Astrocyte of the cerebellum (primary cell): ENCODE measurements at regions of chr16 and their contacts with region 1.

Region 1: GRCh38 chr16:15732416-15732815 is 82.4 kb downstream of the NDE1 start:
- DNase-seq: no peak
- H3K4me3 ChIP-seq: no peak overlapping the region
- CTCF ChIP-seq: no peak

Region 2: DNA sequence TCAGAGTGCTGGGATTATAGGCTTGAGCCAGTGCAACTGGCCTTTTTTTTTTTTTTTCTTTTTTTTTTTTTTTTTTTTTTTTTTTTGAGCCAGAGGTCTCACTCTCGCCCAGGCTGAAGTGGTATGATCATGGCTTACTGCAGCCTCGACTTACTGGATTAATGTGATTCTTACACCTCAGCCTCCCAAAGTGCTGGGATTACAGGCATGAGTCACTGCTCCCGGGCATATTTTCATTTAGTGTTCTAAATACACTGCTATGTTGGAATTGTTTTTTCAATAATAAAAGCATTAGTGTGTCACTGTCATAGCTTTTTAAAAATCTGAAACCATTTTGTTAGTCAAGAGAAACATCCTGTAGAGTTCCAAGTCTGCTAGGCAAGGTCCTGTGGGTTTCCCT is 42.1 kb before region 1 on chr16:
- in situ Hi-C with region 1: no loop called
- DNase-seq: no peak
- H3K4me3 ChIP-seq: no peak overlapping the region
- CTCF ChIP-seq: no peak

Region 3: GRCh38 chr16:15782573-15783365 is 50.4 kb after region 1 on chr16:
- in situ Hi-C with region 1: loop called (anchors 5 kb)
- DNase-seq: no peak
- H3K4me3 ChIP-seq: no peak overlapping the region
- CTCF ChIP-seq: no peak